ENCODE measurements at regions of chr4 and their contacts with region 1.

Region 1: DNA sequence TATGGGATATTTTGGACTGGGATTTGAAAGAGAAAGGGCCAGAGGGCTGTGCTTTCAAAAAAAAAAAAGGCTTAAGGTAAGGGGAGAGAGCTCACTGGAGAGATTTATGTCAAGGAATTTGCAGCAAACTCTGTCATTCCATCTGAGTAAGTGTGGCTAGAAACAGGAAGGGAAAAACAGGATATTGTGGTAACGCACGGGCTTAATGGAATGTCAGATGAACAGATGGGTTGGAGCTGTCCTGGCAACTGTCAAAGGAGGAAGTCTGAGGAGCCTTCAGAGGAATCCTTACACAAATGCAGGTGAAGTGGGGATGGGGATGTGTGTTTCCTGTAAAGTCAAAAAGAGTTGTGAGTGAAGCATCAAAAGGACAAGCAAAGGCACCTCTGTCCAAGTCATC is 15.1 kb upstream of the NKX3-2 start:
- DNase-seq: no peak
- CTCF ChIP-seq: no peak

Region 2: DNA sequence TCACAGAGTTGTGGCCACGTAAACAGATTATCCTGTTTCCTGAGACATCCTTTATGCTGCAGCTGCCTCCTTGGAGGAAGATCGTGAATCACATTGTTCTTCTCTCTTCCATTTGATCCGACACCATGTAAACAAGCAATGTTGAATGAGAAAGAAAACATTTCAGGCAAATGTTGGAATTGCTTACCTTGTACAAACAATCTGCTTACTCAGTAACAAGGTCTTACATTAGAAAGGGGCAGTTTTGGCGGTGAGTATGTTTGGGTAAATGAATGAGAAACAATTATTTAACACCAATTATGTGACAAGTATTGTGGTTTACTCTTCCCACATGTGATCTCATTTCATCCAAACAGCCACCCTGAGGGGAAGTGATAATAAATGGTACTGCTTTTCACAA is 713.0 kb before region 1 on chr4:
- in situ Hi-C with region 1: loop called (anchors 10 kb)
- DNase-seq: no peak
- CTCF ChIP-seq: no peak

Region 3: GRCh38 chr4:13313856-13314255 is 245.6 kb before region 1 on chr4:
- in situ Hi-C with region 1: no loop called
- DNase-seq: no peak
- CTCF ChIP-seq: no peak

Measured in GM13976 (cell line).